A673 (cell line): ENCODE measurements at regions of chr16 and their contacts with region 1.

Region 1: GRCh38 chr16:68520649-68521086 is 18.4 kb upstream of the ZFP90 start:
- DNase-seq: peak; percentile 89
- H3K4me3 ChIP-seq: peak overlapping the region; percentile 20
- H3K27ac ChIP-seq: no peak overlapping the region
- H3K4me1 ChIP-seq: no peaks in the 10 kb centered on the region
- H3K27me3 ChIP-seq: no peaks in the 10 kb centered on the region
- CTCF ChIP-seq: peak; percentile 96

Region 2: GRCh38 chr16:68179196-68179795 is 341.4 kb before region 1 on chr16:
- CTCF ChIA-PET with region 1: no interaction called
- POLR2A ChIA-PET with region 1: no interaction called
- intact Hi-C with region 1: no loop called
- DNase-seq: no peak
- H3K4me3 ChIP-seq: no peak overlapping the region
- H3K27ac ChIP-seq: no peak overlapping the region
- H3K4me1 ChIP-seq: no peaks in the 10 kb centered on the region
- H3K27me3 ChIP-seq: no peaks in the 10 kb centered on the region
- CTCF ChIP-seq: no peak

Region 3: GRCh38 chr16:68264128-68265077 is 256.3 kb before region 1 on chr16 and contains the start of gene SLC7A6:
- CTCF ChIA-PET with region 1: no interaction called
- POLR2A ChIA-PET with region 1: no interaction called
- intact Hi-C with region 1: loop called (anchors 10 kb)
- DNase-seq: peak; percentile 82
- H3K4me3 ChIP-seq: peak within 1 kb of the TSS; percentile 89
- H3K27ac ChIP-seq: peak within 1 kb of the TSS; percentile 93
- H3K4me1 ChIP-seq: peaks cover 11% of the 10 kb centered on the region
- H3K27me3 ChIP-seq: no peaks in the 10 kb centered on the region
- CTCF ChIP-seq: peak; percentile 79
- total RNA-seq, gene SLC7A6: 43.6 and 58.7 TPM in 2 replicates

Region 4: DNA sequence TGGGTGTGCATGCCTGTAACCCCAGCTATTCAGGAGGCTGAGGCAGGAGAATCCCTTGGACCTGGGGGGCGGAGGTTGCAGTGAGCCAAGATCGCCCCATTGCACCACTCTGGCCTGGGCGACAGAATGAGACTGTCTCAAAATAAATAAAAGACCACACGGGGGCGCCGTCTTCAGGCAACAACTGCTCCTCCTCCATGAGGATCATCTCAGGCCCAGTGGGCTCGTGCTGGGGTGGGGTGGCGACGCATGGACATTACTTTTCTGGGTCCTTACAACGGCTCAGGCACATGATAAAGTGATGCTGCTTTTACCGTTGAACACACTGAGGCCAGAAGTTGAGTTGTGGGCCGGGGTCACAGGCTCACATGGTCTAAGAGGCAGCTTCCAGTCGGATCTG is 153.6 kb before region 1 on chr16:
- CTCF ChIA-PET with region 1: no interaction called
- POLR2A ChIA-PET with region 1: no interaction called
- intact Hi-C with region 1: loop called (anchors 10 kb)
- DNase-seq: peak; percentile 58
- H3K4me3 ChIP-seq: no peak overlapping the region
- H3K27ac ChIP-seq: no peak overlapping the region
- H3K4me1 ChIP-seq: peaks cover 9% of the 10 kb centered on the region
- H3K27me3 ChIP-seq: no peaks in the 10 kb centered on the region
- CTCF ChIP-seq: peak; percentile 66

Region 5: DNA sequence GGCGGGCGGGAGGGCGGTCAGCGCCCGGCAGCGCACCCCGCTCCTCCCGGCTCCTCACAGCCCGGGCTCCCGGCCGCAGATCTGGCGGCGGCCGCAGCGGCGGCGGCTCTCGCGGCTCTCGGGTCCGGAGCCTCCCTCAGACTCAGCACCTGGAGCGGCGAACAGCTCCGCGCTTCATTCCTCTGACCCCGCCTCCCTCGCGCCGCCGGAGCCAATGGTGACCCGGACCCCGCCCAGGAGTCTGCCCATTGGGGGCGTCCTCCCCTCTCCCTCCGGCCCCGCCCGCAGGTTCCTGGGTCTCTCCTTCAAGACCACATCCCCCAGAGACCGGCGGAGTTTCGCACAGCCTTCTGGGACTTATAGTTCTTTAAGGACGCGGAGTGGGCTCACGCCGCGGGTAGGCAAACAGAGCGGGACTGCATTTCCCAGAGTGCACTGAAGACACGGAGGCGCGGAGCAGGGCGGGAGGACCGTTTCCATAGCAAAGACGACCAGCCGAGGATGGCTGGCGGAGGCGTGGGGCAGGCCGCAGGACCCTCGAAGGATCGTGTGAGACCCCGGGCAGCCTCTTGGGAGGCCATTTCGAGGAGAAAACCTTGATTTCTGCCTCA is 72.2 kb before region 1 on chr16 and contains the start of gene SMPD3:
- CTCF ChIA-PET with region 1: no interaction called
- POLR2A ChIA-PET with region 1: no interaction called
- intact Hi-C with region 1: loop called (anchors 5 kb)
- DNase-seq: peak; percentile 100
- H3K4me3 ChIP-seq: peak within 1 kb of the TSS; percentile 35
- H3K27ac ChIP-seq: no peak within 1 kb of the TSS
- H3K4me1 ChIP-seq: peaks cover 9% of the 10 kb centered on the region
- H3K27me3 ChIP-seq: peaks cover 24% of the 10 kb centered on the region
- CTCF ChIP-seq: no peak
- total RNA-seq, gene SMPD3: 0.17 and 0.70 TPM in 2 replicates